K562 (cell line): ENCODE measurements at regions of chr21 and their contacts with region 1.

Region 1: DNA sequence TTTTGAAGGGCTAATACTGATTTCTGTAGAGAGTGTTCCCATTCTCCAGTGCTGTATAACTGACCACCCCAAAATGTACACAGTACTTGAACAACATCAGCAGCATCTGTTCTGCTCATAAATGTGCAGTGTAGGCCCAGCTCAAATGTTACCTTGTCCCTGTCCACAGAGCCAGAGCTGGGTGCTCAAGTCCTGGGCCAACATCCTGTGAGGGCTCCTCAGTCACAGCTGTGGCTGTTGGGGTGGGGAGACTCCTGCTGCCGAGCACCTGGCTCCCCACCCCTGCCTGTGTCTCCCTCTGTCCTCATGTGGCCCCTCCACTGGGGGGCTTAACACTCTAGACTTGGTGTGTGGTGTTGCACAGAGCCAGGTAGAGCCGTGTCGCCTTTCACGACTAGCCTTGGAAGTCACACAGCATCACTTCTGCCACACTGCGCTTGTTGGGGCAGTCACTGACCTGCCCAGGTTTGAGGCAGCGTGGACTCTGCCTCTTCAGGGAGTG is 30.5 kb downstream of the DIP2A start:
- DNase-seq: no peak
- ATAC-seq: peak; percentile 32; the same call in 2 of the 3 replicates
- H3K4me3 ChIP-seq: no peak overlapping the region
- H3K27ac ChIP-seq: no peak overlapping the region
- H3K4me1 ChIP-seq: peaks cover 0 to 4% of the 10 kb centered on the region in 2 experiments; a peak in 2 of 5 replicates
- H3K27me3 ChIP-seq: no peaks in the 10 kb centered on the region
- CTCF ChIP-seq: no peak
- EP300 ChIP-seq: no peak
- POLR2A ChIP-seq: no peak
- RAD21 ChIP-seq: no peak

Region 2: GRCh38 chr21:46500224-46500856 is 11.1 kb after region 1 on chr21:
- CTCF ChIA-PET with region 1: no interaction called
- POLR2A ChIA-PET with region 1: interaction called, 17 read pairs
- in situ Hi-C with region 1: no loop called
- intact Hi-C with region 1: no loop called
- DNase-seq: peak; percentile 37 to 61 (median 43)
- ATAC-seq: peak; percentile 83
- H3K4me3 ChIP-seq: no peak overlapping the region
- H3K27ac ChIP-seq: peak overlapping the region; percentile 71
- H3K4me1 ChIP-seq: peaks cover 5 to 14% of the 10 kb centered on the region in 2 experiments; a peak in 4 of 5 replicates
- H3K27me3 ChIP-seq: no peaks in the 10 kb centered on the region
- CTCF ChIP-seq: no peak
- EP300 ChIP-seq: no peak
- POLR2A ChIP-seq: no peak
- RAD21 ChIP-seq: no peak